Activated CD4-positive, alpha-beta memory T cell treated with anti-CD3 and anti-CD28 coated beads for 36 hours (primary cell): ENCODE measurements at regions of chr2 and their contacts with region 1.

Region 1: GRCh38 chr2:144320491-144320890 is 199.4 kb downstream of the ZEB2 start:
- DNase-seq: peak; percentile 70
- H3K4me3 Mint-ChIP-seq: peak overlapping the region; percentile 3
- H3K27ac Mint-ChIP-seq: peak overlapping the region; percentile 66
- H3K4me1 Mint-ChIP-seq: peaks cover 49% of the 10 kb centered on the region
- H3K27me3 Mint-ChIP-seq: no peaks in the 10 kb centered on the region

Region 2: GRCh38 chr2:143705108-143705686 is 615.3 kb before region 1 on chr2:
- CTCF ChIA-PET with region 1: no interaction called
- POLR2A ChIA-PET with region 1: no interaction called
- intact Hi-C with region 1: loop called (anchors 1 kb)
- DNase-seq: no peak
- H3K4me3 Mint-ChIP-seq: no peak overlapping the region
- H3K27ac Mint-ChIP-seq: peak overlapping the region; percentile 68
- H3K4me1 Mint-ChIP-seq: peaks cover 41% of the 10 kb centered on the region
- H3K27me3 Mint-ChIP-seq: no peaks in the 10 kb centered on the region

Region 3: DNA sequence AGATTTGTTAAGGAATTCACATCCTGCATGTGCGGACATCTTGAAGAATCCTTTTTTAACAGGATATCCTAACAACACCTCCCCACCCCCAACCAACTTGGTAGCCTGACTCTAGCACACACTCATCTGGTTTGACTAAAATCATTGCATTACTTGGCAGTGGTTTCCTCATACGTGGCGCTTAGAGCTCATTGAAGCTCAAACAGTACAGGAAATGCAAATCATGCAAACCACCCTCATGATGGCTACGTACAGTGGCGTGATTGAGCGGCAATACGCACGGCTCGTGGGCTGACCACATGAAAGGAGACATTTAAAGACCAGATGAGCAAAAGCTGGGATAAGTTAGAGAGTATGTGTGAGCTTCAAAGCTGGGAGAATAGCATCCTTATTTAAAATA is 136.8 kb before region 1 on chr2:
- CTCF ChIA-PET with region 1: interaction called, 4 read pairs
- POLR2A ChIA-PET with region 1: interaction called, 3 read pairs
- intact Hi-C with region 1: loop called (anchors 1 kb)
- DNase-seq: peak; percentile 89
- H3K4me3 Mint-ChIP-seq: peak overlapping the region; percentile 52
- H3K27ac Mint-ChIP-seq: peak overlapping the region; percentile 87
- H3K4me1 Mint-ChIP-seq: peaks cover 37% of the 10 kb centered on the region
- H3K27me3 Mint-ChIP-seq: no peaks in the 10 kb centered on the region

Region 4: GRCh38 chr2:144267239-144267638 is 53.3 kb before region 1 on chr2:
- CTCF ChIA-PET with region 1: no interaction called
- POLR2A ChIA-PET with region 1: no interaction called
- intact Hi-C with region 1: loop called (anchors 5 kb)
- DNase-seq: peak; percentile 17
- H3K4me3 Mint-ChIP-seq: no peak overlapping the region
- H3K27ac Mint-ChIP-seq: peak overlapping the region; percentile 18
- H3K4me1 Mint-ChIP-seq: peaks cover 28% of the 10 kb centered on the region
- H3K27me3 Mint-ChIP-seq: no peaks in the 10 kb centered on the region

Region 5: DNA sequence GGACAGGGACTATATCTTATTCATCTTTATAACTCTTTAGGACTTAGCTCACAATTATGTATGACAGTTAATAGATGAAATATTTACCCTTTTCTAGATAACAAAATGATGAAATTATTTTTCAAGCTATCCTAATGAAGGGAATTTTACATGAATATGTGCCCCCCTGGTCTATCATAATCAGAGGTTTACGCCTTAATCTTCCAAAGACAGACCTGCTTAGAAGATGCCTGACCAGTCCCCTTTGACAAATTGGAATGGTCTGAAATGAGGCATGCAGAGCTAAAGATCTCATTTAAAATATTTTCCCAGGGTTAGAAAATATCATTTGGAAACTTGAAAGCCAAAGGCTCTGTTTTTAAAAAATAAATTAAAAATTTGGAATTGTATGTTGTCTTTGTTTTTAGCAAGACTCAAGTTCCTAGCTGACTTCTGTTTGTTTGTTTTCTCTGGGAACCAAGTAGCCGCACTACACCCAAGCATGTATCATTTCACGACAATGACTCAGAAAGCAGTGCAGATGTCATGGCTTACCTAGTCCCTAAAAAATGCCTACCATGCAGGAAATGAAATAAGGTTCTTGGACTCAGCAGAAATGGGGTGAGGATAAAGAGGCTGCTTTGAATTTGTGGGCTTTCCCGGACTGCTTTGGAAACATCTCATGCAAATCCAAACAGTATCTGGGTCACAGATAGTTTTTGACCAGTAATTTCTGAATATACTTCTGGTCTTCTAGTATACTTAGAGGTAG is 37.3 kb after region 1 on chr2:
- CTCF ChIA-PET with region 1: no interaction called
- POLR2A ChIA-PET with region 1: no interaction called
- intact Hi-C with region 1: loop called (anchors 1 kb)
- DNase-seq: peak; percentile 61
- H3K4me3 Mint-ChIP-seq: peak overlapping the region; percentile 12
- H3K27ac Mint-ChIP-seq: peak overlapping the region; percentile 88
- H3K4me1 Mint-ChIP-seq: peaks cover 26% of the 10 kb centered on the region
- H3K27me3 Mint-ChIP-seq: no peaks in the 10 kb centered on the region

Region 6: DNA sequence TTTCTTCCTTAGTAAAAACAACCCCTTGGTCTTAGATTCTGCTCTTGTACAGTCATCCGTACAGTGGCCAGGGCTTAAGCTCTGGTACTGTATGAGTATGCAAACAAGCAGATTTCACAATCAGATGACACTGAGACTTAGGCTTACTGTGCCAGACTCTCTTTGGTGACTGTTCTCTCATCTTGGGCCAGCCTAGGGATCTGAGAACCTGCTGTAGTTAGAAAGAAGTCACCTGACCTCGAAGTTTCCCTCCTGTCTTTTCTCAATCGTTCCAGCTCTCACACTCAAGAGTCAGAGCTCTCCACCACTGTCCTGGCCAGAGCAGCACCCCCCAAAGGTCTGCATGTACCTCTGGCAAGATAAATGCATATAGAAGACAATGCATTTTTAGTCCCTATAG is 136.2 kb after region 1 on chr2:
- CTCF ChIA-PET with region 1: no interaction called
- POLR2A ChIA-PET with region 1: no interaction called
- intact Hi-C with region 1: loop called (anchors 2 kb)
- DNase-seq: peak; percentile 31
- H3K4me3 Mint-ChIP-seq: no peak overlapping the region
- H3K27ac Mint-ChIP-seq: no peak overlapping the region
- H3K4me1 Mint-ChIP-seq: peaks cover 52% of the 10 kb centered on the region
- H3K27me3 Mint-ChIP-seq: peaks cover 13% of the 10 kb centered on the region

Region 7: DNA sequence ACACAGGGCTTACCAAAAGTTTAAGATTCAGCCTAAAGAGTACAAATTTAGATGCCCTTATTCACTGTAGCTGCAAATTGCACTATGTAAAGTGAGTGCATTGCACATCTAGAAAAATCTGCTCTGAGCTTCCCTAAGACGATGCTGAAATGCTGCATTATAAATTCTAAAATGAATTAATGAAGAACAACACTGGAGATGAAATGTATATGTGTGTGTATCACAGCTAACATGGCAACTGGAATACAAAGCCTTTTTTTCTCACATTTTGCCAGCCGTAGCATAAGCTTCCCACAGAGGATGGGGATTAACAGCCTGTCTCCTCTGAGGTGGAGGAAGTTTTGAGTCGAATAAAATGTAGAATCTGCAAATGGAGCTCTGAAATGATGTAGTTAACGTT is 537.7 kb after region 1 on chr2:
- CTCF ChIA-PET with region 1: no interaction called
- POLR2A ChIA-PET with region 1: no interaction called
- intact Hi-C with region 1: no loop called
- DNase-seq: no peak
- H3K4me3 Mint-ChIP-seq: no peak overlapping the region
- H3K27ac Mint-ChIP-seq: no peak overlapping the region
- H3K4me1 Mint-ChIP-seq: no peaks in the 10 kb centered on the region
- H3K27me3 Mint-ChIP-seq: no peaks in the 10 kb centered on the region